ENCODE measurements at regions of chr11 and their contacts with region 1.

Region 1: DNA sequence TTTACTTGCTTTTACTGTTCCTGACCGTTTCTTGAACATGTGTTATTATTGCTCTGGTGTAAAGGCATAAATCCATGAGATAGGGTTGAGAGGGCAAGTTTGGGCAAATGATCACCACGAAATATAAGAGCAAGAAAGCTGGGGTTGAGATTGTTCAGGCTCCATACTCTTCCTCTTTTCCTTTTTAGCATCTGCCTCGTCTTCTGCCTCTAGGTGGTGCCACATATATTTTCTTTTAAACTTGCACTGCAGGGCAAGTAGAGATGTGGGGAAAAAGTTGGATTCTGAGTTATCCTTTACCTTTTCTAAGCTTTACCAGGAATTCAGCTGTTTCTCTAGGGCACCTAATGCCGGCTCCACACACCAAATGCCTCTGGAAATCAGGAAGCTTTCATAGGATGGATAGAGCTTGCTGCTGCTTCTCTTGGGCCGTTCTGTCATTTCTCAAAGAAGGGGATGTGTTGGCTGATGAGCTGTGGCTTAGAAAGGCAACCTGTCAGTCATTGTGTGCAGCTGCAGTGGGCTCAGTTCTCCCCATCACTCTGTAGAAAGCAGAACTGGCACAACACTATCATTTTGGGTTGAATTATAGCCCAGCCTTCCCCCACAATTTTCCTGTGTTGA is 98.2 kb downstream of the LDLRAD3 start:
- DNase-seq: no peak
- ATAC-seq: no peak

Region 2: DNA sequence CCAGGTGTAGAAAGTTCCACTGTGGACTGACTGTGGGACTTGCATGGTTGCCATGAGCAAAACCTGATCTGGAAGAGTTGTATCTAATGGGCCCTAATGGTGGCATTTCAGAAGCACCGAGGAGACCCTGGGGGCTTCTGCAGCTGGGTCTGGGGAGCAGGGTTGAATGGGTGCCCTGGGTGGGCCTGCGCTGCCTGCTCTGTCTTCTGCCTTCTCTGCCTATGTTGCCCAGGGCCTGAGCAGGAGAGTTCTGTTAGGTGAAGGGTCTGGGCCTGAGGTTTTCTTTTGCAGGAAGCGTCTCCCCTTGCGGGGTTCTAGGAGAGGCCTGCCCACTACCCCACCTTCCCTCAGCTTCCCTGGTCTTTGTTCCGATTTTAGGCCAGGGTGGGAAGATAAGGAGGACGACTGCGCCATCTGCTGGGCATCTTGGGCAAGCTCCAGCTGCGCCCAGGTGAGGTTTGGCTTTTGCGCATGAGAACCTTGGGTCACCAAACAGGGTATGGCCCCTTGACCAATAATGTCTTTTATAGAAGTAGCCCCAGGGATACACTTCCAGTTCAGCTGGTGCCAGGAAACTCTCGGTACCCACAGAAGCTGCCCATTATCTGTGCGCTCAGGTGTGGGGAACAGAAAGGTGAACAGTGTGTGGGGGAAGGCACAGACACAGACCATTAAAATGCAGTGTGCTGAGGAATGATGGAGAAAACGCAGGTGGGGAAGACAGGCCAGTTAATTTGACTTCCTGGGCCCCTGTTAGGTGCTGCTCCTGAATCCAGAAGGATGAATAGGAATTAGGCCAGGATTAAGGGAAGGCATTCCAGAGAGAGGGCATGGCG is 223.9 kb after region 1 on chr11:
- intact Hi-C with region 1: loop called (anchors 10 kb)
- DNase-seq: no peak
- ATAC-seq: peak; percentile 65

Region 3: DNA sequence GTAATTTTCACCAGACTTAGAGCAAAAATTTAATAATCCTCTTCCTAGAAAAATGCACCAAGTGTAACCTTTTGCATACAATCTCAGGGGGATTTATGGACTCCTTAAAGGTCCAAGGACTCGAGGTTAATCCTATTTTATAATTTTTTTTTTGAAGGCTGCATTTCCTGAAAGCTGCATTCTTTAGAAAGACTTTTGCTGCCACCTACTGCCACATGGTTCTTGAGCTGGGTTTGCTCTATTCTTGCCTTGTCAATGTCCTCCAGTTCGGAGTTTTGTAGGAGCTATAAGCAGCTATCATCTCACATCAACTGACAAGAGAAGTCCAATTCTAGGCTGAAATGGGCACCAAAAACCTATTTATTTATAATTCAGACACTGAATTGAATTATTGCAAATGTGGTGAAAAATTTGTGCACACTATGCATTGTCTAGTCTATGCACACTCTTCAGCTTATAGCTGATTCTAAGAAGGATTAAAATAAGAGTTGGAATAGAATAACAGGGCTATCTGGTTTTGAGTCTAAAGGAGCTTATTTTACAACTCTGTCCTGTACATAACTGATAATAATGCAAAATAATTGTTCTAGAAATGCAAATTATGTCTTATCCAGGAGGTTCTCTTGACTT is 436.7 kb after region 1 on chr11:
- intact Hi-C with region 1: no loop called
- DNase-seq: no peak
- ATAC-seq: peak; percentile 64